ENCODE measurements at regions of chr7 and their contacts with region 1.

Region 1: GRCh38 chr7:143490717-143491306 is 13.1 kb downstream of the TAS2R41 start:
- DNase-seq: peak; percentile 33
- ATAC-seq: no peak
- H3K4me3 Mint-ChIP-seq: no peak overlapping the region
- H3K27ac Mint-ChIP-seq: no peak overlapping the region
- H3K4me1 Mint-ChIP-seq: peaks cover 27% of the 10 kb centered on the region
- H3K27me3 Mint-ChIP-seq: no peaks in the 10 kb centered on the region

Region 2: GRCh38 chr7:143480501-143480900 is 10.3 kb before region 1 on chr7:
- CTCF ChIA-PET with region 1: interaction called, 15 read pairs
- POLR2A ChIA-PET with region 1: no interaction called
- intact Hi-C with region 1: no loop called
- DNase-seq: no peak
- ATAC-seq: no peak
- H3K4me3 Mint-ChIP-seq: no peak overlapping the region
- H3K27ac Mint-ChIP-seq: no peak overlapping the region
- H3K4me1 Mint-ChIP-seq: peaks cover 28% of the 10 kb centered on the region
- H3K27me3 Mint-ChIP-seq: no peaks in the 10 kb centered on the region

Measured in activated CD4-positive, alpha-beta T cell treated with anti-CD3 and anti-CD28 coated beads for 36 hours (primary cell).